ENCODE measurements at regions of chr7 and their contacts with region 1.

Region 1: GRCh38 chr7:38222481-38223096 is 44.5 kb downstream of the STARD3NL start:
- DNase-seq: peak in 1 of 2 experiments; percentile 61
- H3K4me3 ChIP-seq: no peak overlapping the region
- H3K4me3 Mint-ChIP-seq: no peak overlapping the region
- H3K27ac Mint-ChIP-seq: no peak overlapping the region
- H3K4me1 ChIP-seq: no peaks in the 10 kb centered on the region
- H3K4me1 Mint-ChIP-seq: no peaks in the 10 kb centered on the region
- H3K27me3 ChIP-seq: no peaks in the 10 kb centered on the region
- H3K27me3 Mint-ChIP-seq: no peaks in the 10 kb centered on the region
- CTCF ChIP-seq: peak; percentile 85 to 87

Region 2: GRCh38 chr7:37765872-37766525 is 456.6 kb before region 1 on chr7:
- CTCF ChIA-PET with region 1: no interaction called
- POLR2A ChIA-PET with region 1: no interaction called
- intact Hi-C with region 1: no loop called
- DNase-seq: no peak
- H3K4me3 ChIP-seq: no peak overlapping the region
- H3K4me3 Mint-ChIP-seq: no peak overlapping the region
- H3K27ac Mint-ChIP-seq: no peak overlapping the region
- H3K4me1 ChIP-seq: no peaks in the 10 kb centered on the region
- H3K4me1 Mint-ChIP-seq: no peaks in the 10 kb centered on the region
- H3K27me3 ChIP-seq: no peaks in the 10 kb centered on the region
- H3K27me3 Mint-ChIP-seq: peaks cover 3% of the 10 kb centered on the region
- CTCF ChIP-seq: no peak

Region 3: GRCh38 chr7:38178004-38178694 is 44.4 kb before region 1 on chr7 and contains the start of gene STARD3NL:
- CTCF ChIA-PET with region 1: no interaction called
- POLR2A ChIA-PET with region 1: no interaction called
- intact Hi-C with region 1: loop called (anchors 1 kb)
- DNase-seq: peak; percentile 98 to 100
- H3K4me3 ChIP-seq: peak within 1 kb of the TSS; percentile 76
- H3K4me3 Mint-ChIP-seq: peak within 1 kb of the TSS; percentile 94
- H3K27ac Mint-ChIP-seq: peak within 1 kb of the TSS; percentile 90
- H3K4me1 ChIP-seq: no peaks in the 10 kb centered on the region
- H3K4me1 Mint-ChIP-seq: peaks cover 7% of the 10 kb centered on the region
- H3K27me3 ChIP-seq: no peaks in the 10 kb centered on the region
- H3K27me3 Mint-ChIP-seq: peaks cover 2% of the 10 kb centered on the region
- CTCF ChIP-seq: no peak
- total RNA-seq, gene STARD3NL: 32.6 and 33.5 TPM in 2 replicates

Region 4: GRCh38 chr7:38318803-38319416 is 96.3 kb after region 1 on chr7:
- CTCF ChIA-PET with region 1: interaction called, 12 read pairs
- POLR2A ChIA-PET with region 1: no interaction called
- intact Hi-C with region 1: loop called (anchors 1 kb)
- DNase-seq: peak; percentile 71
- H3K4me3 ChIP-seq: no peak overlapping the region
- H3K4me3 Mint-ChIP-seq: peak overlapping the region; percentile 21
- H3K27ac Mint-ChIP-seq: no peak overlapping the region
- H3K4me1 ChIP-seq: 0 out of 2 replicates have a peak, but pooled peaks cover 5% of the 10 kb centered on the region
- H3K4me1 Mint-ChIP-seq: peaks cover 11% of the 10 kb centered on the region
- H3K27me3 ChIP-seq: no peaks in the 10 kb centered on the region
- H3K27me3 Mint-ChIP-seq: peaks cover 8% of the 10 kb centered on the region
- CTCF ChIP-seq: peak; percentile 57 to 69

Measured in Caco-2 (cell line).